Psoas muscle (tissue), 8 donors: ENCODE measurements at regions of chr22 and their contacts with region 1.

Region 1: DNA sequence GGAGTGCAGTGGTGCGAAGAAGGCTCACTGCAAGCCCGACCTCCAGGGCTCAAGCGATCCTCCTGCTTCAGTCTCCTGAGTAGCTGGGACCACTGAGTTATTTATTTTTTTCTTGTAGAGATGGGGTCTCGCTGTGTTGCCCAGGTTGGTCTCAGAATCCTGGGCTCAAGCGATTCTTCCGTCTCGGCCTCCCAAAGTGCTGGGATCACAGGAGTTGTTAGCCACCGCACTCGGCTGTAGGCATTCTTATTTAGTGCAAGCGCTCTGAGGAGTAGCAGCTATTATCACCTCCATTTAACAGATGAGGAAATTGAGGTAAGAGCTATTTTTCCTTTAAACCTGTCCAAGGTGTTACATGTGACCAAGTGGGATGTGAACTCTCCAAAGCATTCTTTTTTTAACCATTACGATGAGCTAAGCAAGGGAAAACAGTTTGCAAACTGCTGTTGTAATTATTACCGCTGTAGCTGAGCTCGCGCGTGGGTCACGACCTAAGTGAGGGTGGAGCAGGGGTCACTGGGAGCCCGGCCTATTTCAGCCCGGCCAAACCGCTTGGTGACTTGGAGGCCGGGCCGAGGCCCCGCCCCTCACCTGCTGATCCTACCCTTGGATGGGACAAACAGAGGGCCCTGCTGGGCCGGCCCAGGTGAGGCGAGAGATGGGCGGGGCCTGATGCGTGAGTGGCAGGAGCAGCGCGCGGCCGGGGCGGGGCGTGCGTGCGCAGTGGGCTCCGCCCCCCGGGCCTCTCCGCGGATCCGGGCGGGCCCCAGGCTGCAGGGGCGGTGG is 449 bp upstream of the KREMEN1 start:
- DNase-seq: peak; percentile 86 to 92
- ATAC-seq: peak; percentile 90 to 93 (median 92)
- H3K4me3 ChIP-seq: peak overlapping the region; percentile 81
- H3K27ac ChIP-seq: no peak overlapping the region
- H3K4me1 ChIP-seq: peaks cover 42% of the 10 kb centered on the region
- H3K27me3 ChIP-seq: no peaks in the 10 kb centered on the region
- CTCF ChIP-seq: no peak

Region 2: DNA sequence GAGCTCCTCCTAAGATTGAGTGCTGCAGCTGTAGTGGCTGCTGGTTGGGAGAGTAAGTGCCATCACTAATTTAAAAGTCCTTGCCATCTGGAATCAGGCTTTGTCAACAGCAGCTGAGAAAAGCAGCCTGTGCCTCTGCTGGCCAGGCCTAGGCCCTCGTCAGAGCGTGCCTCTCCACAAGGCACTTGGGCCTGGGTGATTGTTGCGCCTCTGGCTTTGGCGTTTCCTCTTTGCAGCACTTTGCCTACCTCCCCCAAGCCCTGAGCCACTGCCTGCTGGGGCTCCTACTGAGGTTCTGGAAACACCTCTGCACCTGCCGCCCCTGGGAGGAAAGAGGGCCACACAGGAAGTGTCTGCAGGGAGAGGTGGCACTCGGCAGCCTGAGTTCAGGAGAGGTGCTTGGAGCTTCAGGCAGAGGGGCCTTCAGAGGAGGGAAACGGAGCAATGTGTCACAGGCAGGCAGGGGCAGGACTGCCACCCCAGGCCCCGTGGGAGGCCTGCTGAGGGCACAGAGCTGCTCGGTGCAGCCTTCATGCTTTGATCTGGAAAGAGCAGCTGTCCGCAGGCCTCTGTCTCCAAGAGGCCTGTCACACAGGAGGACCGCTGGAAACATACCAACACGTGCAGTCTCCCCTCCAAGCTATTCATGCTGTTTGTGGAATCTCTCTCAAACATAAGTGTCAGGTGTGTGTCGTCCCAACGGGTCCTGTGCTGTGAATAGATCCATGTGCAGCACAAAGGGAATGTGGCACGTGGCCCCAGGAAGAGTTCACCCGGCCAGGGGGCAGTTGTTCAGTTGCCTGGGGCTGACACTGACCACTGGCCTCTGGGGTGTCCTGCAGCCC is 71.8 kb after region 1 on chr22:
- intact Hi-C with region 1: loop called in 1 of 2 experiments (anchors 5 kb)
- DNase-seq: peak; percentile 51 to 75
- ATAC-seq: peak; percentile 62 to 69 (median 66)
- H3K4me3 ChIP-seq: peak overlapping the region; percentile 29
- H3K27ac ChIP-seq: peak overlapping the region; percentile 90
- H3K4me1 ChIP-seq: peaks cover 59% of the 10 kb centered on the region
- H3K27me3 ChIP-seq: no peaks in the 10 kb centered on the region
- CTCF ChIP-seq: no peak